ENCODE measurements at regions of chr9 and their contacts with region 1.

Region 1: GRCh38 chr9:16970321-16970720 is 99.9 kb upstream of the BNC2 start:
- DNase-seq: no peak
- H3K4me3 ChIP-seq: no peak overlapping the region
- H3K27ac ChIP-seq: no peak overlapping the region
- H3K4me1 ChIP-seq: no peaks in the 10 kb centered on the region
- H3K27me3 ChIP-seq: no peaks in the 10 kb centered on the region
- CTCF ChIP-seq: no peak
- POLR2A ChIP-seq: no peak

Region 2: GRCh38 chr9:17017931-17018491 is 47.7 kb after region 1 on chr9:
- CTCF ChIA-PET with region 1: no interaction called
- POLR2A ChIA-PET with region 1: no interaction called
- dilution Hi-C with region 1: no loop called
- intact Hi-C with region 1: no loop called
- DNase-seq: no peak
- H3K4me3 ChIP-seq: no peak overlapping the region
- H3K27ac ChIP-seq: no peak overlapping the region
- H3K4me1 ChIP-seq: no peaks in the 10 kb centered on the region
- H3K27me3 ChIP-seq: peaks cover 0 to 6% of the 10 kb centered on the region in 2 experiments
- CTCF ChIP-seq: no peak
- POLR2A ChIP-seq: no peak

Region 3: GRCh38 chr9:17045381-17045940 is 75.1 kb after region 1 on chr9:
- CTCF ChIA-PET with region 1: no interaction called
- POLR2A ChIA-PET with region 1: no interaction called
- dilution Hi-C with region 1: no loop called
- intact Hi-C with region 1: loop called (anchors 10 kb)
- DNase-seq: no peak
- H3K4me3 ChIP-seq: no peak overlapping the region
- H3K27ac ChIP-seq: no peak overlapping the region
- H3K4me1 ChIP-seq: no peaks in the 10 kb centered on the region
- H3K27me3 ChIP-seq: peaks cover 0 to 2% of the 10 kb centered on the region in 2 experiments
- CTCF ChIP-seq: no peak
- POLR2A ChIP-seq: no peak

Region 4: DNA sequence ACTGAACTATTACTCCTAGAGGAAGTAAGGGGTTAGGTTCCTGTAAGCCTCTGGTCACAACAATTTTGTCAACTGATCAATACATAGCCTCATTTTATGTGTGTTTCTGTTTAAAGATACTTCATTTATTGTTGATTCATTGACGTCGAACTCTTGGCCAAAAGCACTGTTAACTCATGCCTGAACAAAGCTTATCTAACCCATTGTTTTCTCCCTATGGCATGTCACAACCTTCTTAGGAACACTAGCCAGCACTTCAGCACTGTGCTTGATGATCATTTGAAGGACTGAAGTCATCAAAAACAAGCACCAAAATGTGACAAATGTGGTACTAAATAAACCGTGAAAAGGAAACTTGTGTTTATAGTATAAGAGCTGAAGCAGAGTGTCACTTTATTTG is 178.0 kb after region 1 on chr9:
- CTCF ChIA-PET with region 1: no interaction called
- POLR2A ChIA-PET with region 1: no interaction called
- dilution Hi-C with region 1: no loop called
- intact Hi-C with region 1: no loop called
- DNase-seq: no peak
- H3K4me3 ChIP-seq: no peak overlapping the region
- H3K27ac ChIP-seq: no peak overlapping the region
- H3K4me1 ChIP-seq: no peaks in the 10 kb centered on the region
- H3K27me3 ChIP-seq: no peaks in the 10 kb centered on the region
- CTCF ChIP-seq: no peak
- POLR2A ChIP-seq: no peak

Measured in endothelial cell of umbilical vein (primary cell).